Calu3 (cell line): ENCODE measurements at regions of chr18 and their contacts with region 1.

Region 1: DNA sequence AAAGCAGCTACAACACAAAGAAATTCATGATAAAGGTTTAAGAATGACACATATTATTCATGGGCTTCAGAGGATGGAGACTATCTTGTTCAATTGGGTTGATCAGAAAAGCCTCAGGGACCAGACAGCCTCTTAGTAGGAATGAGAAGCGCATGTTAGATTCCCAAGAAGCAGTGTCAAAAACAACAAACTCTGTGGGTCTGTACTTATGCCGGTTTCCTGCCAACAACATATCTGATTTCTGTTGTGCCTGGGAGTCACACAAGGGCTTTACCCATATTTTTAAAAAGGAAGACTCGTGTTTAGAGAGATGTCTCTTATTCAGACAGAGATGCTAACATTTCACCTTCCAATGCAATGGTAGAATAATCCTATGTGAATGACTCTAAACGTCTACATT is 2180.6 kb upstream of the CELF4 start:
- DNase-seq: no peak
- H3K4me3 Mint-ChIP-seq: no peak overlapping the region
- H3K27ac Mint-ChIP-seq: no peak overlapping the region
- H3K4me1 Mint-ChIP-seq: no peaks in the 10 kb centered on the region
- H3K27me3 Mint-ChIP-seq: no peaks in the 10 kb centered on the region
- CTCF ChIP-seq: no peak

Region 2: GRCh38 chr18:39403121-39403520 is 343.1 kb before region 1 on chr18:
- CTCF ChIA-PET with region 1: interaction called, 10 read pairs
- intact Hi-C with region 1: no loop called
- DNase-seq: no peak
- H3K4me3 Mint-ChIP-seq: no peak overlapping the region
- H3K27ac Mint-ChIP-seq: no peak overlapping the region
- H3K4me1 Mint-ChIP-seq: no peaks in the 10 kb centered on the region
- H3K27me3 Mint-ChIP-seq: no peaks in the 10 kb centered on the region
- CTCF ChIP-seq: no peak

Region 3: DNA sequence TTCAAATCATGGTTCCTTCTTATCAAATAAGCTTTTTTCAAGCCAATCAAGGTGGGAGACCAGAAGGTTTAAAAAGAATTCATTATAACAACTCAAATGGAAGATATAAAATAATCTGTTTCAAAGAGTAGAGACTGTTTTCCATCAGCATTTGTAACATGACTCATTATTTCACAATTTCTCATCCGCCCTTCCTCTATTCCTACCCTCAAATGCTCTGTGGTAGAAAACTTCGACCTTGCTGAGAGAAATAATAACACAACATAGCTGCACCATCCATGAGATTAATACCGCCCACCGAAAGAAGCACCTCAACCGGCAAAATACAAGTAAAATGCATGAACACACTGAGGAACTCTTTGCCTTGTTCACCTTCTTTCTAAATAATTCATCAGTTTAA is 141.4 kb before region 1 on chr18:
- CTCF ChIA-PET with region 1: no interaction called
- intact Hi-C with region 1: no loop called
- DNase-seq: no peak
- H3K4me3 Mint-ChIP-seq: no peak overlapping the region
- H3K27ac Mint-ChIP-seq: no peak overlapping the region
- H3K4me1 Mint-ChIP-seq: peaks cover 38% of the 10 kb centered on the region
- H3K27me3 Mint-ChIP-seq: no peaks in the 10 kb centered on the region
- CTCF ChIP-seq: no peak